Colonic mucosa (tissue), 4 donors: ENCODE measurements at regions of chr6 and their contacts with region 1.

Region 1: DNA sequence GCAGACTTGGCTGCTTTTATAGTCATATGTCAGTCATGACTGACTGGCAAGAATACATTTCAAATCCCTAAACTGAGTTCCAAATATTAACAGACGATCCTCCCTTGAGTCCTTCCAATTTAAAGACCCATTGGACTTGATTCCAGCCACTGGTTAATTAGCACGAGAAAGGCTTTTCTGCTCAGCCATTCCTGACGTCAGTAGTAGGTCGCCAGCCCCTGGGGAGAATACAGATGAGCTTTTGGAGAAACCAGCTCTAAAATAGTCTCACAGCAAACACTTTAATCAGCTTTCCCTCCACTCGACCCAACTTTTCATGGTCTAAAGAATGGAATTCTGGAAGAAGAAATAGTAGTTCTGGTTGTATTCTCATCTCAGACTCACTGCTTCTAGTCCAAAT is 91.6 kb downstream of the SLC22A3 start:
- DNase-seq: no peak
- H3K4me3 ChIP-seq: no peak overlapping the region
- H3K27ac ChIP-seq: no peak overlapping the region
- H3K4me1 ChIP-seq: no peaks in the 10 kb centered on the region
- H3K27me3 ChIP-seq: no peaks in the 10 kb centered on the region
- CTCF ChIP-seq: no peak

Region 2: DNA sequence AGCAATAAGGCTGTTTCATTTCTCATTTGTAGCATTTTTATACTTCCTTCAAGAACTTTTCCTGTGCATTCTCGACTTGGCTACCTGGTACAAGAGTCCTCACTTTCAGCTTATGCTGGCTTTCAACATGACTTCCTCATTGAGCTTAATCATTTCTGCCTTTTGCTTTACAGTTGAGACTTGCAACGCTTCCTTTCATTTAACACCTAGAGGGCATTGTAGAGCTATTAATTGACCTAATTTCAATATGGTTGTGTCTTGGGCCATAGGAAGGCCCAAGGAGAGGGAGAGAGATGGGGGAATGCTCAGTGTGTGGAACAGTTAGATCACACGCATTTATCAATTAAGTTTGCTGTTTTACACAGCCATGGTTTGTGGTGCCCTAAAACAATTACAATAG is 218.3 kb before region 1 on chr6:
- intact Hi-C with region 1: loop called (anchors 10 kb)
- DNase-seq: no peak
- H3K4me3 ChIP-seq: no peak overlapping the region
- H3K27ac ChIP-seq: peak overlapping the region; percentile 71
- H3K4me1 ChIP-seq: peaks cover 3% of the 10 kb centered on the region
- H3K27me3 ChIP-seq: no peaks in the 10 kb centered on the region
- CTCF ChIP-seq: no peak